Cardiac septum (tissue), 1 donor: ENCODE measurements at regions of chr7 and their contacts with region 1.

Region 1: GRCh38 chr7:37833107-37833817 is 15.1 kb upstream of the NME8 start:
- DNase-seq: no peak

Region 2: DNA sequence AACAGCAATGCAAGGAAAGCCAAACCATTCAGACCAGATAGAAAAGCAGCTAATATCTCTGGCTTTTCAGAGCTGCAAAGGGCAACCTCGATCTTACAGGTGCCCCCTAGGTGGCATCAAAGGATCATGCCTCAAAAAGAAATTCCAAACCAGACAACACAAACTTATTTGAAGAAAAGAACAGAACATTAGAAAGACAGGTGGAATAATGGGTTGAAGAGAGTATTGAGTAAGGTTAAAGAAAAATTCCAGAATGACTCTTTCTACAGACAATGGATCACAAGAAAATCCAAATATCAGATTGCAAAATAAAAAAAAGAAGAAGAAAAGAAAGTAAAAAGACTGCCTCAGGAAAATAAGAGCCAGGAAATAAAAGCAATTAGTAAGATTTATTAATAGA is 598.3 kb before region 1 on chr7:
- intact Hi-C with region 1: loop called (anchors 10 kb)
- DNase-seq: no peak

Region 3: GRCh38 chr7:37633048-37633447 is 200.2 kb before region 1 on chr7:
- intact Hi-C with region 1: loop called (anchors 5 kb)
- DNase-seq: no peak

Region 4: DNA sequence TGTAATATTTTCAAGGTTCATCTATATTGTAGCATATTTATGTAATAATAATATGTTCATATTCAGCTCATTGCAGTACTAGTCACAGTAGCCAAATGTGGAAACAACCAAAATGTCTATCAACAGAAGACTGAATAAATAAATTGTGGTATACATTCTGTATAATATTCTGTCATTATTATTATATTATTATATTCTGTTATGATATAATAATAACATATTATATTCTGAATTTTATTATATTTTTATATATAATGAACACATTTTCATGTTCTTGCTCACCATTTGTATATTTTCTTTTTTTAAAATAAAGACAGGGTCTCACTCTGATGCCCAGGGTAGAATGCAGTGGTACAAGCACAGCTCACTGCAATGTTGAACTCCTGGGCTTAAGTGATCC is 253.6 kb after region 1 on chr7:
- intact Hi-C with region 1: no loop called
- DNase-seq: no peak